PC-9 (cell line): ENCODE measurements at regions of chr10 and their contacts with region 1.

Region 1: DNA sequence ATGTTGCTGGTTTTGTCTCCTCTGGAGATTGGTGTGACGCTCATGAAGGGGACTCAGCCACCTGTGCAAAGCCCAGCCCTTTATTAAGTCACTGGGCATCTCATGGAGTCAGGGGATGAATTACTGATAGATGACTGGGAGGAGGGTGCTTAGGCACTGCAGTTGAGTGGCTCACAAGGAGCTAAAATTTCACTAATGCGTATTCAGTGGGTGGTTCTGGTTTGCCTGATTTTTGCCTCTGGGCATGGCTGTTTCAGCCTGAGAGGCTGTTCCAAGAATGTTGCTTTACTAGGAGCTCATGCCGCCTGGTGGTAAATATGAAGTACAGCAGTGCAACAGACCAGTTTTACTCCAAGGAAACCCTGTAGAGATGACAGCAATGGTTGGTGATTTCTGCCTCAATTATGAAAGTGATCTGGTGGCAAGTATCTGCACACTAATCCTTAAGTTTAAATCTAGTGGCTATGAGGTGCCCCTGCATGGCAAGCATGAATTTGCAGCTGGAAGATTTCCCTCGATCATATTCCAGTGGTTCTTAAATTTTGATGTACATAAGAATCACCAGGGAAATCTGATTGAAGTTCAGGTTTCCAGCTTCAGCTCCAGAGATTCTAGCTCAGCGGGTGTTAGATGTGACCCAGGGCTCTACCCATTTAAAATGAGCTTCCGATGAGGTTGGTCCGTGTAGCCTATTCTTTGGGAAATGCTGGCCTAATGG is 19.9 kb downstream of the ACTA2 start:
- DNase-seq: peak; percentile 58 to 79
- H3K4me3 ChIP-seq: no peak overlapping the region
- H3K27ac ChIP-seq: no peak overlapping the region
- H3K4me1 ChIP-seq: 0 out of 2 replicates have a peak, but pooled peaks cover 6% of the 10 kb centered on the region
- H3K27me3 ChIP-seq: no peaks in the 10 kb centered on the region
- CTCF ChIP-seq: peak; percentile 83

Region 2: DNA sequence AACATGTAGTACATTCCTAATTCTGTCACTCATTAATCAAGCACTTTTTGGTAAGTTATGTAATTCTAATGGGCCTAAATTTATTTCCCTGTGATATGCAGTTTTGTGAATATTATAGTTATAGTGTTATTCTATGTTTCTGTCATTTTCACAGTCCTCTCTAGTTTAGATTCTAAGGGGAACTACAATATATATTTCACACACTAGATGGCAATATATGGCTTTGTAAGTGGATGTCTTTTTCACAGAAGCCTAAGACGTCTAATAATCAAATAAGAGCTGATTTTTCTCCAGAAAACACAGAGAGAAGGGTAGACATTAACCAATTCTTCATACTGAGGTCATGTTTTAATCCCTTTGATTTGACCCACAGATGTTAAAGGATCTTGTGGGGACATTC is 367.6 kb before region 1 on chr10:
- CTCF ChIA-PET with region 1: interaction called, 4 read pairs
- POLR2A ChIA-PET with region 1: no interaction called
- intact Hi-C with region 1: loop called (anchors 1 kb)
- DNase-seq: no peak
- H3K4me3 ChIP-seq: no peak overlapping the region
- H3K27ac ChIP-seq: no peak overlapping the region
- H3K4me1 ChIP-seq: no peaks in the 10 kb centered on the region
- H3K27me3 ChIP-seq: no peaks in the 10 kb centered on the region
- CTCF ChIP-seq: peak; percentile 60

Region 3: DNA sequence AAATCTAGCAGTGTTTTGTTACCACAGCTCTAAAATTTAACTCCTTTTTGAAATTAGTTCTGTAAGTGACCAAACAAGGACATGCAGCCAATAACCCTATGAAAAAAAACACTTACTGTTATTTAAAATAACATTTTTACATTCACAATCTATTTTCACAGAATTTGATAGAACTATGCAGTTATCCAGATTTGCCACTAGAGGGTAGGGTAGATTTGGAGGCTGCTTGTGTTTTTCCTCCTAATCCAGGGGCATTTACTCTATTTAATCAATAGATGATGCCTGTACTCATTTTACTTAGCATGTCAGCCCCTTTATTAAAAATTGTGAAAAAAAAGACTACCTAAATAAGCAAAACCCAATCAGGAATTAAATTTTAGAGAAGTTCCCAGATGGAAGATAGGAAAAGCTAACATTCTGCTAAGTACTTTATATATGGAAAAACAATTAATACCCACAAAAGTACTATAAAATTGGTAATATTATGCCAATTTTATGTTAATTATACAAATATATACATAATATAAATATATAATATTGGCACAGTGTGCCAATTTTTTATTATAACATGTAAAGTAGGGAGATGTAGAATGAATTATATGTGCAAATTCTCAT is 244.7 kb before region 1 on chr10:
- CTCF ChIA-PET with region 1: interaction called, 5 read pairs
- POLR2A ChIA-PET with region 1: no interaction called
- intact Hi-C with region 1: loop called (anchors 1 kb)
- DNase-seq: no peak
- H3K4me3 ChIP-seq: no peak overlapping the region
- H3K27ac ChIP-seq: no peak overlapping the region
- H3K4me1 ChIP-seq: no peaks in the 10 kb centered on the region
- H3K27me3 ChIP-seq: no peaks in the 10 kb centered on the region
- CTCF ChIP-seq: peak; percentile 86

Region 4: DNA sequence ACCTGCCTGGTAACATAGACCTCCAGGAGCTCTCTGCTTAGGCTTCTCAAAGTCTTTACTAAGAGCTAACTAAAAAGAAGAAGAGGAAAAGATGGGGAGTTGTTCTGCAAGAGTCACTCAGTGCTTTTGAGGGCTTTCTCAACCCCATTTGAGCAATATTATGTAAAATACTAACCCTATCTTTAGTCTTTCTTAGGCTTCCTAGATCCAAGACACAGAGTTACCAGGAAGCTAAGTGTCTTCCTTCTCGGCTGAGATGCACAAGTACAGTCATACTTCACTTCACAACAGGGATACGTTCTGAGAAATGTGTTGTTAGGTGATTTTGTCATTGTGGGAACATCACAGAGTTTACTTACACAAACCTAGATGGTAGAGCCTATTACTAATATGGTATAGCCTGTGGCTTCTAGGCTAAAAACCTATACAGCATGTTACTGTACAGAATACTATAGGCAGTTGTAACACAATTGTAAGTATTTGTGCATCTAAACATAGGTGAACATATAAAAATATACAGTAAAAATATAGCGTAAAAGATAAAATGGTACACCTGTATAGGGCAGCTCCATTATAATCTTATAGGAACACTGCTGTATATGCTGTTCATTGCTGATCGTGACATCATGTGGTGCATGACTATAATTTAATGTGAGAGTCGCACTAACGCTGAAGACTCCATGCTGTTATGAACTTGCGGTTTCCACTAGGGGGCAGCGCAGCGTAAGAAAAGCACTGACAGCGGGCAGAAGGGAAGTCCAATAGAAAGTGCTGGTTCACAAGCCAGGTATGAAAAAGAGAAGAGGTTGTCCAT is 97.4 kb before region 1 on chr10:
- CTCF ChIA-PET with region 1: interaction called, 57 read pairs
- POLR2A ChIA-PET with region 1: no interaction called
- intact Hi-C with region 1: loop called (anchors 1 kb)
- DNase-seq: peak; percentile 57 to 65
- H3K4me3 ChIP-seq: no peak overlapping the region
- H3K27ac ChIP-seq: no peak overlapping the region
- H3K4me1 ChIP-seq: no peaks in the 10 kb centered on the region
- H3K27me3 ChIP-seq: no peaks in the 10 kb centered on the region
- CTCF ChIP-seq: peak; percentile 85

Region 5: DNA sequence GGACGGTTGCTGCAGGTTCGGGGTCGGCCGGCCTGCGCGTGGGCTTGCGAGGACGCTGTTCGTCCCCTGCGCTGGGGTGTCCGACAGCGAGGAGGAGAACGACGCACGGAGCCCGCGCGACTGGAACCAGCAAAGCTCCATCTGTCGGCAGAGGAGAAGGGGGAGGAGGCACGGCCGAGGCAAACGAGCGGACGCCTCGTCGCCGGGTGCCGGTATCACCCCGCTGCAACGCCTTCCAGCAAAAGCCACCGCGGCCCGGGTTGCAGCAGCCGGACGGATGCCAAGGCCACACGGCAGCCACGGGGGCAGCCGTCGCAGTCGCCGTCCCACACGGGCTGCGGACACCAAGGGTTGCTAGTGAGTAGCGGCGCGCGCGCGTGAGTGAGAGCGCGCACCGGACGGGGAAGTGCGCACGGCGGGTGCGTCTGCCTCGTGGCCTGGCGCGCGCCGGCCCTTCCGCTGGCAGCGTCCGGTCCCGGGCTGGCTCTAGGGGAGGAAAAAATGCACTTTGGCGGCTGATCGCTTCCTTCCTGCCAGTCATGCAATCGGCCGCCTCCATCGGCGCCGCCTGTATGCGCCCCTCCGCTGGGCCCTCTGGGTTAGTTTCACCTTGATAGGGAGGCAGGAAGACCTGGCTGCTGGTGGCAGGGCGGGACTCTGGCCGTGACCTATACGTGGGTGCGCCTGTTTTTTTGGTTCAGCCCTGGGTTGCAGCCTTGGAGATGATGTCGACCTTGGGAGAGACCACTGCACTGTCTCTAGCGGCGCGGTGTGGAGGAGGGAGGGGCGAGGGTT is 52.2 kb before region 1 on chr10:
- CTCF ChIA-PET with region 1: interaction called, 3 read pairs
- POLR2A ChIA-PET with region 1: no interaction called
- intact Hi-C with region 1: loop called (anchors 1 kb)
- DNase-seq: peak; percentile 49 to 70
- H3K4me3 ChIP-seq: peak overlapping the region; percentile 82
- H3K27ac ChIP-seq: peak overlapping the region; percentile 92
- H3K4me1 ChIP-seq: peaks cover 27% of the 10 kb centered on the region
- H3K27me3 ChIP-seq: no peaks in the 10 kb centered on the region
- CTCF ChIP-seq: peak; percentile 27; the same call in 1 of the 2 replicates

Region 6: GRCh38 chr10:88990384-88991160 is 57.9 kb after region 1 on chr10 and contains the start of gene FAS:
- CTCF ChIA-PET with region 1: interaction called, 4 read pairs
- POLR2A ChIA-PET with region 1: no interaction called
- intact Hi-C with region 1: loop called (anchors 1 kb)
- DNase-seq: peak; percentile 67 to 71
- H3K4me3 ChIP-seq: peak within 1 kb of the TSS; percentile 85
- H3K27ac ChIP-seq: peak within 1 kb of the TSS; percentile 42
- H3K4me1 ChIP-seq: peaks cover 26% of the 10 kb centered on the region
- H3K27me3 ChIP-seq: no peaks in the 10 kb centered on the region
- CTCF ChIP-seq: no peak
- total RNA-seq, gene FAS: 7.6 and 8.5 TPM in 2 replicates

Region 7: GRCh38 chr10:89003344-89003743 is 70.6 kb after region 1 on chr10:
- CTCF ChIA-PET with region 1: no interaction called
- POLR2A ChIA-PET with region 1: no interaction called
- intact Hi-C with region 1: no loop called
- DNase-seq: no peak
- H3K4me3 ChIP-seq: no peak overlapping the region
- H3K27ac ChIP-seq: no peak overlapping the region
- H3K4me1 ChIP-seq: no peaks in the 10 kb centered on the region
- H3K27me3 ChIP-seq: no peaks in the 10 kb centered on the region
- CTCF ChIP-seq: no peak

Region 8: GRCh38 chr10:89029785-89030437 is 97.2 kb after region 1 on chr10:
- CTCF ChIA-PET with region 1: interaction called, 3 read pairs
- POLR2A ChIA-PET with region 1: no interaction called
- intact Hi-C with region 1: loop called (anchors 1 kb)
- DNase-seq: peak in 1 of 2 experiments; percentile 42
- H3K4me3 ChIP-seq: no peak overlapping the region
- H3K27ac ChIP-seq: no peak overlapping the region
- H3K4me1 ChIP-seq: peaks cover 40% of the 10 kb centered on the region
- H3K27me3 ChIP-seq: no peaks in the 10 kb centered on the region
- CTCF ChIP-seq: peak; percentile 79